ENCODE measurements at regions of chr7 and their contacts with region 1.

Region 1: DNA sequence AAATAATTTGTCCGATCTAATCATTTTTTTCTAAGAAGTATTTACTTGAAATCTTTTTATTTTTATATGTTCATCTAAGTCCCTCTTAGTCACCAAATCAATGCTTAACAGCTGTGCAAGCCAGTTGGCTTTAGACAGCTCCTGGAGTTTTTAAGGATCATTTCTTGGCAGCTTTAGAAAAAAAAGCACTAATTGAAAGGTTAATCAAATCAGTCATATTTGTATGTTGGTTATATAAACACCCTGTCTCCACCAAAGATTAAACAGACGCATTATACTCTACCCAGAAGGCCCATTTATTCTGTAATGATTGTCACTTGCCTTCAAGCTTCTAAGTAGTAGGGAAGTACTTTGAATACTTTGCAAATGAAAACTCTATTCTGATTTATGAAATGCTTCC is 60.2 kb downstream of the PAXIP1 start:
- DNase-seq: no peak
- ATAC-seq: no peak
- H3K4me3 ChIP-seq: no peak overlapping the region
- H3K27ac ChIP-seq: no peak overlapping the region
- H3K4me1 ChIP-seq: no peaks in the 10 kb centered on the region
- CTCF ChIP-seq: no peak
- EP300 ChIP-seq: no peak
- POLR2A ChIP-seq: no peak
- RAD21 ChIP-seq: no peak

Region 2: GRCh38 chr7:154953006-154953684 is 10.5 kb after region 1 on chr7:
- CTCF ChIA-PET with region 1: interaction called, 16 read pairs
- POLR2A ChIA-PET with region 1: no interaction called
- DNase-seq: peak; percentile 27 to 66
- ATAC-seq: peak; percentile 62 to 87; a peak in 4 of 6 replicates
- H3K4me3 ChIP-seq: no peak overlapping the region
- H3K27ac ChIP-seq: no peak overlapping the region
- H3K4me1 ChIP-seq: no peaks in the 10 kb centered on the region
- CTCF ChIP-seq: peak; percentile 61
- EP300 ChIP-seq: no peak
- POLR2A ChIP-seq: no peak
- RAD21 ChIP-seq: peak in 1 of 2 experiments; percentile 12; a peak in 1 of 5 replicates

Region 3: DNA sequence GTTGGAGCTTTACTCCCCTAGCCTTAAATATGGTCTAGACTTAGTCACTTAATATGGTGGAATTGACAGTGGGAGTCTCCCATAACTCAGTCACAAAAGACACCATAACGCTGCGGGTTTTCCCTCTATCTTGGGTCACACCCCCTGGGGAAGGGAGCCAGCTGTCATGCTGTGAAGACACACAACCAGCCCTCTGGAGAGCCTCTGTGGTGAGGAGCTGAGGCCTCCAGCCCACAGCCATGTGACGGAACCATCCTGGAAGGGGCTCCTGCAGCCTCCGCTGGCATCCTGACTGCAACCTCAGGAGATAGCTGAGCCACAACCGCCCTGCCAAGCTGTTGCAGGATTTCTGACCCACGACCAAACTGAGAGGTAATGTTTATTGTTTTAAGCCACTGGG is 22.3 kb after region 1 on chr7:
- CTCF ChIA-PET with region 1: no interaction called
- POLR2A ChIA-PET with region 1: no interaction called
- DNase-seq: no peak
- ATAC-seq: no peak
- H3K4me3 ChIP-seq: no peak overlapping the region
- H3K27ac ChIP-seq: no peak overlapping the region
- H3K4me1 ChIP-seq: no peaks in the 10 kb centered on the region
- CTCF ChIP-seq: no peak
- EP300 ChIP-seq: no peak
- POLR2A ChIP-seq: no peak
- RAD21 ChIP-seq: no peak

Measured in A549 (cell line).